ENCODE measurements at regions of chr3 and their contacts with region 1.

Region 1: GRCh38 chr3:53130179-53131061 is at the start of gene RFT1:
- DNase-seq: peak; percentile 96
- H3K4me3 ChIP-seq: peak within 1 kb of the TSS; percentile 90 to 99 (median 91)
- H3K27ac ChIP-seq: peak within 1 kb of the TSS; percentile 70
- H3K4me1 ChIP-seq: peaks cover 14% of the 10 kb centered on the region
- H3K27me3 ChIP-seq: no peaks in the 10 kb centered on the region
- CTCF ChIP-seq: no peak
- POLR2A ChIP-seq: peak; percentile 96
- total RNA-seq, gene RFT1: 28.8 and 29.8 TPM in 2 replicates

Region 2: DNA sequence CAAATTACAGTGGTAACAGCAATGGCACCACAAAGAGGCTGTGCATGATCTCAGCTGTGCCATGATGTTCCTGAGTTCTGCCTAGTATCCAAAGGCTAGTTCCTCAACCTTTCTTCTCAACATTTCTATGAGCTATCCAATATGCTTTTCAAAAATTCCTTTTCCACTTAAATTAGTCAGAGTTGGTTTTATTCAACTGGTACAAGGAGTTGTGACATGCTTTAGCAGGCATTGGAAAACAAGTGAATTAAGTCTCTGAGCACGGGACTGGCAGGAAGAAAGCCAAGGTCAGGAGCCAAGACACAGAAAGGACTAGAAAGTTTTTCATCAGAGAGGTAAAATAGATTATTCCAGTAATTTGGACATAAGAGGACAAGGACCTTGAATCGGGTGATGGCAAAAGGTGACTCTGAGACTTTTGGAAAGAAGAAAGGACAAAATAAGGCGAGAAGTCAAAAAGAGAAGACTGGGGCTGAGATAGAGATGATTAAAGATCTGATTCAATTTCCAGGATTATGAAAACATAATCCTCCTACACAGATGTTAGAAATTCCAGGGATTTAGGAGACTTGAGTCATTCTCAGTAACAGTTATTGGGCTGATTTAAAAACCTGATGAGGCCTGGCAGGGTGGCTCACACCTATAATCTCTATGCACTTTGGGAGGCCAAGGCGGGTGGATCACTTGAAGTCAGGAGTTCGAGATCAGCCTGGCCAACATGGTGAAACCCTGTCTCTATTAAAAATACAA is 480.8 kb before region 1 on chr3:
- CTCF ChIA-PET with region 1: no interaction called
- POLR2A ChIA-PET with region 1: no interaction called
- dilution Hi-C with region 1: no loop called
- intact Hi-C with region 1: no loop called
- DNase-seq: no peak
- H3K4me3 ChIP-seq: no peak overlapping the region
- H3K27ac ChIP-seq: no peak overlapping the region
- H3K4me1 ChIP-seq: no peaks in the 10 kb centered on the region
- H3K27me3 ChIP-seq: no peaks in the 10 kb centered on the region
- CTCF ChIP-seq: no peak
- POLR2A ChIP-seq: no peak

Region 3: GRCh38 chr3:53083521-53083920 is 46.9 kb before region 1 on chr3:
- CTCF ChIA-PET with region 1: no interaction called
- POLR2A ChIA-PET with region 1: no interaction called
- dilution Hi-C with region 1: no loop called
- intact Hi-C with region 1: no loop called
- DNase-seq: no peak
- H3K4me3 ChIP-seq: no peak overlapping the region
- H3K27ac ChIP-seq: no peak overlapping the region
- H3K4me1 ChIP-seq: no peaks in the 10 kb centered on the region
- H3K27me3 ChIP-seq: no peaks in the 10 kb centered on the region
- CTCF ChIP-seq: no peak
- POLR2A ChIP-seq: no peak

Region 4: GRCh38 chr3:53140847-53141845 is 10.7 kb after region 1 on chr3:
- CTCF ChIA-PET with region 1: interaction called, 19 read pairs
- POLR2A ChIA-PET with region 1: no interaction called
- dilution Hi-C with region 1: no loop called
- intact Hi-C with region 1: no loop called
- DNase-seq: no peak
- H3K4me3 ChIP-seq: no peak overlapping the region
- H3K27ac ChIP-seq: no peak overlapping the region
- H3K4me1 ChIP-seq: no peaks in the 10 kb centered on the region
- H3K27me3 ChIP-seq: no peaks in the 10 kb centered on the region
- CTCF ChIP-seq: no peak
- POLR2A ChIP-seq: no peak

Region 5: DNA sequence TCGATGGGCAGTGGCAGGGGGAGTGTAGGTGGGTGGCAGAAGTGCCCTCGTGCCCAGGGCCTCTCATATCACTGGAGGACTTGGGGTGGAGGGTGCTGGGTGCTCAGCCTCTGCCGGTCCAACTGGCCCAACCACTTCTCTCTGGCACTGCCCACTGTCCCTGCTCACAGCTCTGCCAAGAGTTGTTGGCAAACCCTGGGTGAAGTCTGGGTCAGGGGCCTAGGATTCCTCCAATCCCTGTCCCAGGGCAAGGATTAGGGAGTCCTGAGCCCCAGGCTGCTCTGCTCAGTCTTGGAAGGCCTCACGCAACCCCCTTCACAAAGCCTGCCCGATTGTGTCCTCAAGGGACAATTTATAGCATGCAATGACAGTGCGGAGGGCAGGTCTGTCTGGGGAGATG is 25.3 kb after region 1 on chr3:
- CTCF ChIA-PET with region 1: interaction called, 34 read pairs
- POLR2A ChIA-PET with region 1: no interaction called
- dilution Hi-C with region 1: no loop called
- intact Hi-C with region 1: loop called (anchors 1 kb)
- DNase-seq: no peak
- H3K4me3 ChIP-seq: no peak overlapping the region
- H3K27ac ChIP-seq: no peak overlapping the region
- H3K4me1 ChIP-seq: peaks cover 17% of the 10 kb centered on the region
- H3K27me3 ChIP-seq: peaks cover 0 to 2% of the 10 kb centered on the region in 2 experiments
- CTCF ChIP-seq: no peak
- POLR2A ChIP-seq: no peak

Region 6: GRCh38 chr3:53160660-53161449 is 30.4 kb after region 1 on chr3 and contains the start of gene PRKCD:
- CTCF ChIA-PET with region 1: interaction called, 34 read pairs
- POLR2A ChIA-PET with region 1: no interaction called
- dilution Hi-C with region 1: no loop called
- intact Hi-C with region 1: loop called (anchors 1 kb)
- DNase-seq: peak; percentile 78
- H3K4me3 ChIP-seq: peak within 1 kb of the TSS; percentile 57 to 87 (median 64)
- H3K27ac ChIP-seq: peak within 1 kb of the TSS; percentile 57
- H3K4me1 ChIP-seq: peaks cover 21% of the 10 kb centered on the region
- H3K27me3 ChIP-seq: peaks cover 0 to 2% of the 10 kb centered on the region in 2 experiments
- CTCF ChIP-seq: peak; percentile 29 to 63
- POLR2A ChIP-seq: peak; percentile 32
- total RNA-seq, gene PRKCD: 15.5 and 17.5 TPM in 2 replicates

Region 7: DNA sequence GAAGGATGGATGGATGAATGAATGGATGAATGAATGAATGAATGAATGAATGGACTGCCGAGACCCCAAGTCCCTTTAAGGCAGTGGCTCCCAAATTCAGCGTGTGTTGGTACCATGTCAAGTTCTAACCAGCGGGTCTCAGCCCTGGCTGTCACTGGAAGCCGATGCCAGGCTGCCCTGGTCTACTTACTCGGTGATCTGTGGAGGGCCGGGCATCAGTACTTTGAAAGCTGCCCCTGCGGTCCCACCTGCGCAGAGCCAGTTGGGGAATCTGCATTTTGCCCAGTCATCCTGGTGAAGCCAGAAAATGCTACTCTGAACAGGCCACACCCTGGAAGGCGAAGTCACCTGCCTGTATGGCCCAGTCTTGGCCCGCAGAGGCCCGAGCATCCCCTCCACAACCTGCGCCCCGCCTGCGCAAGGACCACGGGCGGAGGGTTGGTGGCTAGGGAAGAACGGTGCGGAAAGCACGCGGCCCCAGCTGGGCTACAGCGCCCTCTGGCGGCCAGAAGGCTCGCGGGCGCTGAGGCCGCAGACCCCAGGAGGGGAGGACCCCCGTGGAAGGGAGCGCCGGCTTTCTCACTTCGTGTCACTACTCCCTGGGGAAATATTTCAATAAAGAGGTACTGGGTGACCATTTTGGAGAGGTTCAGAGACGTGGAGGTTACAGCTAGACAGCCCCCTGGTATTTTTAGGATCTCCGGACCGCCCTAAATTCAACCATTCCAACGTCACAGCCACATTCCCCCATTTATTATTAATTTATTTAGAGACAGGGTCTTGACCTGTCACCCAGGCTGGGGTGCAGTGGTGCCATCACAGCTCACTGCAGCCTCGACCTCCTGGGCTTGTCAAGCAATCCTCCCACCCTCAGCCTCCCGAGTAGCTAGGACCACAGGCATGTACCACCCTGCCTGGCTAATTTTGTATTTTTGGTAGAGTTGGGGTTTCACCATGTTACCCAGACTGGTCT is 65.5 kb after region 1 on chr3:
- CTCF ChIA-PET with region 1: interaction called, 199 read pairs
- POLR2A ChIA-PET with region 1: no interaction called
- dilution Hi-C with region 1: no loop called
- intact Hi-C with region 1: loop called (anchors 1 kb)
- DNase-seq: peak; percentile 28
- H3K4me3 ChIP-seq: no peak overlapping the region
- H3K27ac ChIP-seq: no peak overlapping the region
- H3K4me1 ChIP-seq: peaks cover 11% of the 10 kb centered on the region
- H3K27me3 ChIP-seq: no peaks in the 10 kb centered on the region
- CTCF ChIP-seq: peak; percentile 98 to 99
- POLR2A ChIP-seq: no peak